ENCODE measurements at regions of chr9 and their contacts with region 1.

Region 1: GRCh38 chr9:115815786-115816185 is 337.8 kb upstream of the PAPPA start:
- H3K4me3 Mint-ChIP-seq: no peak overlapping the region
- H3K27ac Mint-ChIP-seq: no peak overlapping the region
- H3K4me1 Mint-ChIP-seq: no peaks in the 10 kb centered on the region
- H3K27me3 Mint-ChIP-seq: no peaks in the 10 kb centered on the region

Region 2: GRCh38 chr9:115832031-115832430 is 16.2 kb after region 1 on chr9:
- intact Hi-C with region 1: loop called (anchors 1 kb)
- H3K4me3 Mint-ChIP-seq: no peak overlapping the region
- H3K27ac Mint-ChIP-seq: no peak overlapping the region
- H3K4me1 Mint-ChIP-seq: no peaks in the 10 kb centered on the region
- H3K27me3 Mint-ChIP-seq: no peaks in the 10 kb centered on the region